IMR-90 (cell line): ENCODE measurements at regions of chr2 and their contacts with region 1.

Region 1: DNA sequence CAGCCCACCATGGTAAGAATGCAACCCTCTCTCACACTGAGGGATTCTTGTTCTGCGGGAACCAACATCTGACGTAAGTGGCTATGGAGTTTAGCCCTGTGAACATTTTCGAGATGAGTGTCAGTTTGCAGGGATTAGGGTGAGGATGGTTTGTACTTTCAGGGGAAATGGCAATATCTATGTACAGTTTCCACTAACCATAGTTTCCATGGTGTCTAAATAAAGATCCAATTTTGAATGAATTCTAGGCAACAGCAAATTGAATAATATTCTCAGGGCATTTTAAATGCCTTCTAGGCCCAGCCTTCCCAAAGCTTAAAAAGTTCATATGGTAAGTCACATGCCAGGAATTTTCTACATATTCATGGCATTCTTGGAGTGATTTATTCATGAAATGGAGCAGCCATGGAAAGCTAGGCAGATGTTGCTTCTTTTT is 105.4 kb upstream of the MMADHC start:
- DNase-seq: peak; percentile 38
- ATAC-seq: peak; percentile 79
- H3K4me3 ChIP-seq: no peak overlapping the region
- H3K27ac ChIP-seq: peak overlapping the region; percentile 39; the same call in 1 of the 2 replicates
- H3K4me1 ChIP-seq: peaks cover 4% of the 10 kb centered on the region
- H3K27me3 ChIP-seq: no peaks in the 10 kb centered on the region
- CTCF ChIP-seq: no peak
- POLR2A ChIP-seq: no peak
- RAD21 ChIP-seq: no peak

Region 2: DNA sequence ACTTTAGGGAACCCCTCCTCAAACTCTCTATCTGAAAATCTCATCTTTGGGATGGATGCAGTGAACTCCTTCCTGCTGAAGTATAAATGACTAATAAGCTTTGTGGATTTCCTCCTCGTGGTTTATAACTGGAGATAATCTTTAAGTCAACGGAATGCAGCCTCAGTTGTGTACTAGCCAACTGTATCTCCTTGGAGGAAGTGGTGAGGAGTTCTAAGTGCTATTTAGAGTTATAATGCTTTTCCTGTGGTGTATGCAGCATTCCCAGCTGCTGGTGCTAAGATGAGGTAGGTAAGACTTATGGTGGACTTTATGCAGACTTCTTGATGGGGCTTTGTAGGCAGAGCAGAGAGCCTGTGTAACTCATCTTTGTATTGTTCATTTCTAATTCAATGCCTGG is 563.5 kb before region 1 on chr2:
- CTCF ChIA-PET with region 1: no interaction called
- POLR2A ChIA-PET with region 1: no interaction called
- dilution Hi-C with region 1: no loop called
- in situ Hi-C with region 1: no loop called
- intact Hi-C with region 1: no loop called
- DNase-seq: no peak
- ATAC-seq: no peak
- H3K4me3 ChIP-seq: no peak overlapping the region
- H3K27ac ChIP-seq: no peak overlapping the region
- H3K4me1 ChIP-seq: no peaks in the 10 kb centered on the region
- H3K27me3 ChIP-seq: no peaks in the 10 kb centered on the region
- CTCF ChIP-seq: no peak
- POLR2A ChIP-seq: no peak
- RAD21 ChIP-seq: no peak

Region 3: GRCh38 chr2:149648282-149649030 is 44.5 kb before region 1 on chr2:
- CTCF ChIA-PET with region 1: no interaction called
- POLR2A ChIA-PET with region 1: no interaction called
- dilution Hi-C with region 1: no loop called
- in situ Hi-C with region 1: no loop called
- intact Hi-C with region 1: no loop called
- DNase-seq: peak; percentile 99
- ATAC-seq: peak; percentile 96
- H3K4me3 ChIP-seq: no peak overlapping the region
- H3K27ac ChIP-seq: peak overlapping the region; percentile 52; the same call in 1 of the 2 replicates
- H3K4me1 ChIP-seq: peaks cover 8% of the 10 kb centered on the region
- H3K27me3 ChIP-seq: no peaks in the 10 kb centered on the region
- CTCF ChIP-seq: 0 out of 2 replicates have a peak, but pooled peaks have one; percentile 18
- POLR2A ChIP-seq: no peak
- RAD21 ChIP-seq: no peak

Region 4: DNA sequence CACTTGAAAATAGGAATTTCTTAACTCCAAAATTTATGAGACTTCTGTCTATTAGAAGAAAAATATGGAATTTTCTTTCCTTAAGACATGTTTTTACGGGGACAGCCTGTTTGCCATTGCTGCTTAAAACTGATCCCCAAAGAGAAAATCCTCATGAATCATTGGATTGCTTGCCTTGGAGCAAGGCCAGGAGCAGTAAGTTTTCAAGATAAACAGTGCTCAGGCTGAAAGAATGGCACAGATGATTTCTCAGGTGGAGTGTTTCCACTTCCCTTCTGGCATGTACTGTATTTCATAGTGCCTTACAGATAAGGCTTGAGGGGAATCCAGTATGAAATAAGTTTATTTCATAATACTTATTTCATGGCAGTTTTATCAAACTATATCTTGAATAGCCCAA is 31.1 kb before region 1 on chr2:
- CTCF ChIA-PET with region 1: interaction called, 10 read pairs
- POLR2A ChIA-PET with region 1: no interaction called
- dilution Hi-C with region 1: no loop called
- in situ Hi-C with region 1: no loop called
- intact Hi-C with region 1: no loop called
- DNase-seq: peak; percentile 82
- ATAC-seq: peak; percentile 64
- H3K4me3 ChIP-seq: no peak overlapping the region
- H3K27ac ChIP-seq: no peak overlapping the region
- H3K4me1 ChIP-seq: no peaks in the 10 kb centered on the region; the same call in 1 of the 2 replicates
- H3K27me3 ChIP-seq: no peaks in the 10 kb centered on the region
- CTCF ChIP-seq: no peak
- POLR2A ChIP-seq: no peak
- RAD21 ChIP-seq: no peak